HCT116 (cell line): ENCODE measurements at regions of chr13 and their contacts with region 1.

Region 1: GRCh38 chr13:101098873-101099272 is 317.4 kb downstream of the NALCN start:
- DNase-seq: no peak
- ATAC-seq: no peak
- H3K4me3 ChIP-seq: no peak overlapping the region
- H3K27ac ChIP-seq: no peak overlapping the region
- H3K4me1 ChIP-seq: no peaks in the 10 kb centered on the region
- H3K27me3 ChIP-seq: no peaks in the 10 kb centered on the region; the same call in 1 of the 2 replicates
- CTCF ChIP-seq: no peak
- POLR2A ChIP-seq: no peak
- RAD21 ChIP-seq: no peak

Region 2: GRCh38 chr13:100646030-100646673 is 452.7 kb before region 1 on chr13:
- CTCF ChIA-PET with region 1: no interaction called
- POLR2A ChIA-PET with region 1: no interaction called
- RAD21 ChIA-PET with region 1: no interaction called
- intact Hi-C with region 1: loop called (anchors 2 kb)
- DNase-seq: peak; percentile 15
- ATAC-seq: peak; percentile 81
- H3K4me3 ChIP-seq: no peak overlapping the region
- H3K27ac ChIP-seq: no peak overlapping the region
- H3K4me1 ChIP-seq: no peaks in the 10 kb centered on the region
- H3K27me3 ChIP-seq: no peaks in the 10 kb centered on the region
- CTCF ChIP-seq: peak; percentile 25 to 63 (median 63); a peak in 5 of 6 replicates
- POLR2A ChIP-seq: no peak
- RAD21 ChIP-seq: peak; percentile 51

Region 3: GRCh38 chr13:100721885-100722512 is 376.9 kb before region 1 on chr13:
- CTCF ChIA-PET with region 1: no interaction called
- POLR2A ChIA-PET with region 1: no interaction called
- RAD21 ChIA-PET with region 1: no interaction called
- intact Hi-C with region 1: loop called (anchors 2 kb)
- DNase-seq: peak; percentile 37
- ATAC-seq: peak; percentile 89
- H3K4me3 ChIP-seq: no peak overlapping the region
- H3K27ac ChIP-seq: no peak overlapping the region
- H3K4me1 ChIP-seq: no peaks in the 10 kb centered on the region
- H3K27me3 ChIP-seq: no peaks in the 10 kb centered on the region
- CTCF ChIP-seq: peak; percentile 33 to 83 (median 71); a peak in 5 of 6 replicates
- POLR2A ChIP-seq: no peak
- RAD21 ChIP-seq: peak; percentile 52

Region 4: GRCh38 chr13:100892981-100893380 is 205.9 kb before region 1 on chr13:
- CTCF ChIA-PET with region 1: no interaction called
- POLR2A ChIA-PET with region 1: no interaction called
- RAD21 ChIA-PET with region 1: no interaction called
- intact Hi-C with region 1: no loop called
- DNase-seq: no peak
- ATAC-seq: no peak
- H3K4me3 ChIP-seq: no peak overlapping the region
- H3K27ac ChIP-seq: no peak overlapping the region
- H3K4me1 ChIP-seq: no peaks in the 10 kb centered on the region
- H3K27me3 ChIP-seq: 0 out of 2 replicates have a peak, but pooled peaks cover 4% of the 10 kb centered on the region
- CTCF ChIP-seq: no peak
- POLR2A ChIP-seq: no peak
- RAD21 ChIP-seq: no peak